ENCODE measurements at regions of chr6 and their contacts with region 1.

Region 1: DNA sequence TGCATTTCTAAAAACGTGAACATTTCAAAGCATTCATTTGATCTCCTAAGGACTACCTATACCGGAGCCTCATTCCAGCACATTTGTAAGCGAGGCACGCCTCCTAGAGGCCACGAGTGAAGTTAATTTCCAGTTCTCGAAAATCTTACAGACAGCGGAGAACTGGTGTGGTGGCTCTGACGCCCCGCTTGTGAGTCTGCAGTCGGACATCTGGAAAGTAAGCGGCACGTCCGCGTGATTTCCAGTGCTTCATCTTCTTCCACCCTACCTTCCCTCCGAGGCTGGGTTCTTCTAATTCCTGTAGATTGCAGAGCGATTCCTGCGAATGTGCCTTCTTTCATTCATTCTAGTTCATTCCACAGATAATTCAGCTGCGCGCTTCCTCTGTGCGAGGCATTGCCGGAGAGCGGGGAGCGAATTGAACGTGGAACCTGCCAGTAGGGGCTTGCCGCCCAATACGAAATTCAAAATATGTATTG is 810 bp upstream of the PRIM2 start:
- DNase-seq: peak; percentile 67 to 89 (median 84)
- H3K4me3 ChIP-seq: peak overlapping the region; percentile 40 to 98 (median 71)
- H3K27ac ChIP-seq: peak overlapping the region in 56 of 59 donors; percentile 39 to 92 (median 77)
- H3K27me3 ChIP-seq: no peaks in the 10 kb centered on the region
- CTCF ChIP-seq: peak; percentile 67 to 95 (median 85)

Region 2: GRCh38 chr6:56637640-56638039 is 679.0 kb before region 1 on chr6:
- intact Hi-C with region 1: loop called in 1 of 2 experiments (anchors 10 kb)
- DNase-seq: no peak
- H3K4me3 ChIP-seq: no peak overlapping the region
- H3K27ac ChIP-seq: peak overlapping the region in 46 of 59 donors; percentile 2 to 83 (median 58)
- H3K27me3 ChIP-seq: no peaks in the 10 kb centered on the region
- CTCF ChIP-seq: peak; percentile 59 to 94 (median 79)

Region 3: GRCh38 chr6:56902641-56903464 is 413.8 kb before region 1 on chr6:
- intact Hi-C with region 1: loop called (anchors 2 to 5 kb)
- DNase-seq: peak in 8 of 10 donors; percentile 29 to 75 (median 56)
- H3K4me3 ChIP-seq: peak overlapping the region in 22 of 59 donors; percentile 1 to 43 (median 19)
- H3K27ac ChIP-seq: peak overlapping the region in 5 of 59 donors; percentile 5 to 35 (median 23)
- H3K27me3 ChIP-seq: no peaks in the 10 kb centered on the region
- CTCF ChIP-seq: peak; percentile 60 to 88 (median 76)

Region 4: GRCh38 chr6:57040009-57040408 is 276.6 kb before region 1 on chr6:
- intact Hi-C with region 1: loop called in 1 of 2 experiments (anchors 10 kb)
- DNase-seq: no peak
- H3K4me3 ChIP-seq: no peak overlapping the region
- H3K27ac ChIP-seq: no peak overlapping the region
- H3K27me3 ChIP-seq: peaks cover 0 to 12% (median 0%) of the 10 kb centered on the region in 45 donors
- CTCF ChIP-seq: no peak

Region 5: GRCh38 chr6:57089687-57090460 is 226.7 kb before region 1 on chr6 and contains the start of gene ZNF451:
- intact Hi-C with region 1: loop called in 1 of 2 experiments (anchors 5 kb)
- DNase-seq: peak; percentile 96 to 99 (median 98)
- H3K4me3 ChIP-seq: peak within 1 kb of the TSS; percentile 40 to 83 (median 71)
- H3K27ac ChIP-seq: peak within 1 kb of the TSS in 58 of 59 donors; percentile 19 to 94 (median 82)
- H3K27me3 ChIP-seq: no peaks in the 10 kb centered on the region
- CTCF ChIP-seq: peak in 41 of 56 donors; percentile 9 to 65 (median 32)
- total RNA-seq, gene ZNF451: 70.0 to 124 (median 97.6) TPM

Region 6: DNA sequence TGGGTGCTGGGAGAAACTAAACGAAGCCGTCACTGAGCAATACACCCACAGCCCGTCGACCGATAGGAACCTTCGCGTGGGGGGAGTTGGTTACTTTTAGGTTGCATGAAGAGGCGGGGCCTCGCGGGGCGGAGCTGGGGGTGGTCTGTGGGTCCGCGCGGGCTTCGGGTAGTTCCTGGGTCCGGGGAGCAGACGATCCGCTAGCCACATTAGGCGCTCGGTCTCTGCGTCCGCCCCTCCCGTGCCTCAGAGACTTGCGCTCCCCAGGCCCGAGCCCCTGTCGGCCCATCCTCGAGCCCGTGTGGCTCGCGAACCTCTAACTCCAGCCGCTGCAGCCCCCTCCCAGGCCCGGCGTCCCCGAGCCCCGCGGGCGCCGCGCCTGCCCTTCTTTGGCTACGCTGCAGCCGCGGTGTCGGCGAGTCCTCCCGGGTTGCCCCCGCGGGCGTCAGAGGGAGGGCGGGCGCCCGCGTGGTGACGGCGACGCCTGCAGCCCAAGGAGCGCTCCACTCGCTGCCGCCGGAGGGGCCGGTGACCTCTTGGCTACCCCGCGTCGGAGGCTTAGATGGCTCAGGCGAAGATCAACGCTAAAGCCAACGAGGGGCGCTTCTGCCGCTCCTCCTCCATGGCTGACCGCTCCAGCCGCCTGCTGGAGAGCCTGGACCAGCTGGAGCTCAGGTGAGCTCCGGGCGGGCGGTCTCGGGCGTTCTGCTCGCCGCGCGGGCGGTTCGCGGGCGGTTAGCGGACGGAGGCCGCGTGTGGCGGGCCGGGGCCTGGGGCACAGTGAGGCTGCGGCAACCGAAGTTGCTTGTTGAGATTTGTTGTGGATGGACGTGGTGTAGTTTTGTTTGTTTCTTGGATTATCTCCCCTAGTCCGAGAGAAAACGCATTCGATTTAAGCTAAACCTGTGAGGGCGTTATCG is 144.2 kb before region 1 on chr6 and contains the start of gene BAG2:
- intact Hi-C with region 1: loop called (anchors 10 kb)
- DNase-seq: peak; percentile 55 to 86 (median 80)
- H3K4me3 ChIP-seq: peak within 1 kb of the TSS; percentile 61 to 93 (median 81)
- H3K27ac ChIP-seq: peak within 1 kb of the TSS in 58 of 59 donors; percentile 36 to 94 (median 84)
- H3K27me3 ChIP-seq: no peaks in the 10 kb centered on the region
- CTCF ChIP-seq: peak in 36 of 56 donors; percentile 4 to 58 (median 30)
- total RNA-seq, gene BAG2: 1.7 to 10.3 (median 4.0) TPM

Measured in dorsolateral prefrontal cortex (tissue), 120 donors.